Right ventricle myocardium superior (tissue), 1 donor: ENCODE measurements at regions of chr3 and their contacts with region 1.

Region 1: GRCh38 chr3:28726840-28727239 is 378.2 kb upstream of the AZI2 start:
- DNase-seq: peak; percentile 60
- ATAC-seq: peak; percentile 87

Region 2: GRCh38 chr3:28485164-28485563 is 241.7 kb before region 1 on chr3:
- intact Hi-C with region 1: loop called (anchors 10 kb)
- DNase-seq: no peak
- ATAC-seq: no peak

Region 3: DNA sequence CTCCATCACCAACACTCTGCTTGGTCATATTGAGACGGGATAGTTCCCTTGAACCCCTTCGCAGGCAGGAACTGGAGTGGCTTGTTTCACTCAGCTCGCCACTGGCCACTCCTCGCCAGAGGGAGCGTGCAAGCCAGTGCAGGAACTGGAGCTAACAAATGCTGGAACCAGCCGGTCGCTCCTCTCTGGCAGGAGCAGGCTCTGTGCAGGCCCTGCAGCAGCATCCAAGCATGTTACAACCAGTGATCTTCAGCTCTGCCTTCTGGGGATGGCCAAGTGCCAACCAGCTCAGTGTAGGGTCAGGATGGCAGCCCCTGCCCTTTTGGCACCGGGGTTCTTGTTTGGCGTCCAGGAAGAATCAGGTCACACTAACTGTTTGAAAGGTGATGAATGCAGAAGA is 49.3 kb before region 1 on chr3:
- intact Hi-C with region 1: loop called (anchors 10 kb)
- DNase-seq: no peak
- ATAC-seq: no peak